SK-N-SH (cell line): ENCODE measurements at regions of chr3 and their contacts with region 1.

Region 1: DNA sequence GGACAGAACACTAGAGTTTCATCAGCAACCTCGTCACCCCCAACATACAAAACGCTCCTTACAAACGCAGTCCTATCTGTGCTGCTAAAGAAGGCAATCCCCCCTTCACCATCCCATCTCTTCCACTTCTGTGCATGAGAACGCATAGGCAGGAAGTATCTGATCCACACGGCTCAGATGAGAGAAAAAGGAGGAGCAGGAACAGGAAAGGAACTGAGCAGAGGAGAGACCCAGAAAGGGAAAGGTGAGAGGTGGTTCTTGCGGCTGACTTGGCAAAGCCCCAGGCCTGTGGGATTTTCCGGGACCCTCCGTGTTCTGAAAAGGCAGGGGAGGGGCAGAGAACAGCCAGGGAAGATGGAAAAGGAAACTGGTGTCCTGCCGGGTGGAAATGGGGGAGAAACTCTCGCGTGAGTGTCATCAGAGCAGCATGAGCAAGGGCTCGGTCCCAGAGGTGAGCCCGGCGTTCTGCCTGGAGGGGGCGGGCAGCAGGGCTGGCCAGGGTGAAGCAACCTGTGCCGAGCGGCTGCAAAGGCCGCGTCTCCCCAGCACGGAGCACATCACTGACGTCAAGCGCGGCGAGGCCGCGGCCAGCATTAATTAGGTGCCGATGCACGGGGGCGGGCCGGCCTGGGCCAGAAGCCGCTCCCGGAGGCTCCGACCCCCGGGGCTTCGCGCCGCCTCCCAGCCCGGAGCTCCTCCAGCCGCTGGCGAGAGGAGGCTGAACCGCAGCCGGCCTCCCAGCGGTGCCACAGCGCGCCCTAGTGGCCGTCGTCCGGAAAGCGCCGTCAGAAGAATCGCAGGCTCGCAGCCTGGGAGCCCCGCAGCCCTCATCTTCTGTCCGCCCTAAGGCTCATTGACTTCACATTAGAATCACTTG is 35.8 kb downstream of the CPN2 start:
- DNase-seq: peak; percentile 94
- H3K4me3 ChIP-seq: peak overlapping the region; percentile 44 to 69
- H3K27ac ChIP-seq: peak overlapping the region in 1 of 2 experiments; percentile 24; a peak in 2 of 4 replicates
- H3K4me1 ChIP-seq: peaks cover 0 to 28% of the 10 kb centered on the region in 2 experiments; a peak in 1 of 4 replicates
- H3K27me3 ChIP-seq: peaks cover 26% of the 10 kb centered on the region
- CTCF ChIP-seq: peak; percentile 86
- EP300 ChIP-seq: no peak
- RAD21 ChIP-seq: peak; percentile 96

Region 2: DNA sequence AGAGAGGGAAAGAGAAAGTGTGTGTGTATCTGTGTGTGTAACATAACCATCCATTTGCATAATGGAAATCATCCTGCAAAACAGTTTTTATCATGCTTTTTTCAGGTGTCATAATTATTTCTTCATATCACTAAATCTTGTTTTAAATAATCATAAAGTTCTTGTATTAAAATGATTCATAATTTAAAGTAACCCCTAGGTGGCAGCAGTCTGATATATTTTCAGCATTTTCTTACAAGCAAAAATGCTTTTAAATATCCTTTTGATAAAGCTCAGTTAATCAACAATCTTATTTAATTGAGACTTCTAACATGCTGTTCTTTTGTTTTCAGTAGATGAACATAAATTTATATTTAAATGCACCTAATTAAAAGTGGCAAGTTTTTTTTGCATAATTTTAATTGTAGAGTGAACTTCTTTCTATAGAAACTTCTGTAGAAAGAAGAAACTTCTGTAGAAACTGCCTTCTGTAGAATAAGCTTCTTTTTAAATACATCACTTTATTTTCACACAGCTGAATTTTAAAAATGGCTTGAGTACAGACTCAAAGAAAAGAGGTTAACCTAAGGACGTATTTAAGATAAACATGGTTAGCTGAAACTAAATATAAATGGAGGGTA is 649.8 kb before region 1 on chr3:
- CTCF ChIA-PET with region 1: interaction called, 45 read pairs
- POLR2A ChIA-PET with region 1: no interaction called
- DNase-seq: peak; percentile 24
- H3K4me3 ChIP-seq: no peak overlapping the region
- H3K27ac ChIP-seq: no peak overlapping the region
- H3K4me1 ChIP-seq: no peaks in the 10 kb centered on the region; a peak in 1 of 4 replicates
- H3K27me3 ChIP-seq: no peaks in the 10 kb centered on the region
- CTCF ChIP-seq: peak; percentile 75
- EP300 ChIP-seq: no peak
- RAD21 ChIP-seq: peak; percentile 64

Region 3: GRCh38 chr3:194123726-194124125 is 191.6 kb before region 1 on chr3:
- CTCF ChIA-PET with region 1: interaction called, 13 read pairs
- POLR2A ChIA-PET with region 1: no interaction called
- DNase-seq: no peak
- H3K4me3 ChIP-seq: no peak overlapping the region
- H3K27ac ChIP-seq: no peak overlapping the region
- H3K4me1 ChIP-seq: no peaks in the 10 kb centered on the region
- H3K27me3 ChIP-seq: peaks cover 4% of the 10 kb centered on the region
- CTCF ChIP-seq: no peak
- EP300 ChIP-seq: no peak
- RAD21 ChIP-seq: no peak

Region 4: DNA sequence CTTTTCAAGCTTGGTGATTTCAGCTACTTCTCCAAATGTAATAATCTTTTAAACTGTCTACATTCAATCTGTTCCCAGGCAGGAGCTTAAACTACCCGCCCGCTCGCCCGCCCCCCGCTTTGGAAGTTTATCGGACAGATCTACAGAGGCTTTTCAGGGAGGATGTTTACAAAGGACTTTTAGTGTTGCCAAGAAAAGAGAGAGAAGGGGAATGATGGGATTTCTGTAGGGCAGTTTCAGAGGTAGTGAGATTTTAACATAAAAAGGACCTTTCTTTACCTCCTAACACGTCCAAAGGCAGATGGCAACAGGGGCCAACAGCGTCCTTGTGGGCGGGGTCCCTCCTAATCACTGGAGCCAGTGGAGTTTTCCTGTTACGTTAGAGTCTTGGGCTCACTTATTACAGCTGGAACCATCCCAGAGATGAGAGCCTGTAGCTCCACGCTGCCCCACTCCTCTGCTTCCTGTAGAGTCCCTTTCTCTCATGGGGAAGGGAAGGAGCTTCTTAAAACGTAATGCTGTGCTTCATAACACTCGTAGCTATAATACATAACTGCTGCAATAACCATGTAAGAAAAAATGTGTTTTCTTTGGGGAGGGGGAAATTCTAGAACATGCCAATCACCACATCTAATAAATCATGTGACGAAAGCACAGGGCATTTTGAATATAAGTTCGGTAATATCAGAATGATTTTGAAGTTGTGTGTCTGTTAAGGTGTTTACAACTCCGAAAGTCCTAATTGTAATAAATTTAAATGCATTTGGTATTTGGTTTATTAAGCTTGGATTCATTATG is 148.4 kb before region 1 on chr3:
- CTCF ChIA-PET with region 1: interaction called, 19 read pairs
- POLR2A ChIA-PET with region 1: no interaction called
- DNase-seq: peak; percentile 68
- H3K4me3 ChIP-seq: no peak overlapping the region; a peak in 1 of 4 replicates
- H3K27ac ChIP-seq: peak overlapping the region in 1 of 2 experiments; percentile 43; a peak in 2 of 4 replicates
- H3K4me1 ChIP-seq: peaks cover 6 to 10% of the 10 kb centered on the region in 2 experiments; a peak in 3 of 4 replicates
- H3K27me3 ChIP-seq: peaks cover 32% of the 10 kb centered on the region; the same call in 1 of the 2 replicates
- CTCF ChIP-seq: no peak
- EP300 ChIP-seq: no peak
- RAD21 ChIP-seq: no peak

Region 5: GRCh38 chr3:194265483-194265892 is 49.8 kb before region 1 on chr3:
- CTCF ChIA-PET with region 1: interaction called, 48 read pairs
- POLR2A ChIA-PET with region 1: interaction called, 13 read pairs
- DNase-seq: peak; percentile 83
- H3K4me3 ChIP-seq: no peak overlapping the region
- H3K27ac ChIP-seq: peak overlapping the region in 1 of 2 experiments; percentile 64; a peak in 2 of 4 replicates
- H3K4me1 ChIP-seq: peaks cover 0 to 33% of the 10 kb centered on the region in 2 experiments; a peak in 2 of 4 replicates
- H3K27me3 ChIP-seq: no peaks in the 10 kb centered on the region
- CTCF ChIP-seq: no peak
- EP300 ChIP-seq: no peak
- RAD21 ChIP-seq: no peak; the same call in 1 of the 2 replicates

Region 6: GRCh38 chr3:194296454-194297263 is 18.7 kb before region 1 on chr3:
- CTCF ChIA-PET with region 1: interaction called, 17 read pairs
- POLR2A ChIA-PET with region 1: no interaction called
- DNase-seq: no peak
- H3K4me3 ChIP-seq: no peak overlapping the region
- H3K27ac ChIP-seq: no peak overlapping the region
- H3K4me1 ChIP-seq: peaks cover 0 to 25% of the 10 kb centered on the region in 2 experiments; a peak in 2 of 4 replicates
- H3K27me3 ChIP-seq: no peaks in the 10 kb centered on the region
- CTCF ChIP-seq: no peak
- EP300 ChIP-seq: 0 out of 4 replicates have a peak, but pooled peaks of 1 of the 2 experiments have one; percentile 18
- RAD21 ChIP-seq: no peak